ENCODE measurements at regions of chr15 and their contacts with region 1.

Region 1: DNA sequence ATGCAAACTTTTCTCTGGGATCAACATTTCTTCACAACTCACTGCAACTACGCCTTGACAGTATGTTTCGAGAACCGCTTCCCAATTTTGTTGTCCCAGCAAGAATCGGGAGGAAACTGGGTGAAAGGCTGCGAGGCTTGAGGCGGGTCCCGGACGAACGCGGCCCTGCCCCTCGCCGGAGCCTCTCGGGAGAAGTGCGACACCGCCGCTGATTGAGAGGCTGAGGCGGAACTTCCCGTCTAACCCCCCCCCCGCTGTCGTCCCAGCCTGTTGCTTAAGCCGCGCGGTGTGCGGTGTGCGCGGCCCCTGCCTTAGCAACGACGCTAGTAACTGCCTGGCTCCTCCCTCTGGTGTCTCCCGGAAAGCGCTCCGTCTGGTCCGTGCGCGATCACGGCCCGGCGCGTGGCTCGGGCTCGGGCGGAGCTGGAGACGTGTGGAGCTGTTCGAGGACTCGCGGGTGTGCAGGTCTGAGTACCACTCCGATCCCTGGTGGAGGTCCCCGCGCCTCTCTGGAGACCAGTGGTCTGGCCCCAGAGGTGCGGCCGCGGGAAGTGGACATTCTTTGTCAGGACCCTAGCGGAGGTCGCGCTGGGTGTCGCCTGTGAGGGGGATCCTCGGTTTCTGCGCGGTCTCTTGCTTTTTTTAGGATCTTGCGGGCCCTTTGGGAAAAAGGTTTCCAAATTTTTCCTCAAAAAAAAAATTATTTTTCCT is at the starts of genes DTWD1 and FAM227B:
- DNase-seq: peak; percentile 93
- H3K4me3 Mint-ChIP-seq: peak within 1 kb of the TSS; percentile 85
- H3K27ac Mint-ChIP-seq: peak within 1 kb of the TSS; percentile 88
- H3K4me1 Mint-ChIP-seq: peaks cover 40% of the 10 kb centered on the region
- H3K27me3 Mint-ChIP-seq: no peaks in the 10 kb centered on the region
- total RNA-seq, gene DTWD1: 21.1 and 26.5 TPM in 2 replicates
- total RNA-seq, gene FAM227B: 2.3 and 2.9 TPM in 2 replicates

Region 2: DNA sequence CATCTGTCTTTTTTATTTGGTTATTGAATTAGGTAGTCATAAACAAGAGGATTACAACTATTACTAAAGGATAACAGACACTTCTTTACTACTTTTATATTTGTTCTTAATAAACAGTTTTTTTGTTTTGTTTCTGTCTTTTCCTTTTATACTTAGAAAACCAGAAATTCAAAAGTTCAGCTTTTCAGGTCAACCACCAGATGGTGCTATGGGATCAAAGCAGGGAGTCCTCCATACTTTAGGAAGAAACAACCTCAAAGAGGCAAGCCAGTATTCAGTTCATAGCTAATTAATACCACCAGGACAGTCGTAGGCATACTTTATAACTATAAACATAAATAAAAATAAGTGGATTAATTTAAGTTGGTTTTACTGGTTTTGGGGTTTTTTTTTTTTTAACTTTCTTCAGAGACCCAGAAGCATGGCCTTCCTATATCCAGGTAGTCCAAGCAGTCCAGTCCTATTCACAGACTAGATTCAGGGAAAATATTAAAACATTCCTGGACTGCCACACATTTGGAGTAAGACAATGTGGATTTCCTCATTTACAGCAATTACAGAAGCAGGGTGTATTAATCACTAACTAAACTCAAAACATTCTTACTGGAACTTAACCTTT is 758.9 kb before region 1 on chr15:
- intact Hi-C with region 1: loop called (anchors 5 kb)
- DNase-seq: peak; percentile 25
- H3K4me3 Mint-ChIP-seq: no peak overlapping the region
- H3K27ac Mint-ChIP-seq: no peak overlapping the region
- H3K4me1 Mint-ChIP-seq: peaks cover 27% of the 10 kb centered on the region
- H3K27me3 Mint-ChIP-seq: peaks cover 6% of the 10 kb centered on the region

Region 3: GRCh38 chr15:49155110-49155833 is 465.5 kb before region 1 on chr15 and contains the start of gene COPS2:
- intact Hi-C with region 1: loop called (anchors 2 kb)
- DNase-seq: peak; percentile 93
- H3K4me3 Mint-ChIP-seq: peak within 1 kb of the TSS; percentile 99
- H3K27ac Mint-ChIP-seq: peak within 1 kb of the TSS; percentile 99
- H3K4me1 Mint-ChIP-seq: peaks cover 47% of the 10 kb centered on the region
- H3K27me3 Mint-ChIP-seq: peaks cover 3% of the 10 kb centered on the region
- total RNA-seq, gene COPS2: 99.7 and 105 TPM in 2 replicates

Region 4: GRCh38 chr15:49471733-49472132 is 149.1 kb before region 1 on chr15:
- intact Hi-C with region 1: loop called (anchors 2 kb)
- DNase-seq: peak; percentile 8
- H3K4me3 Mint-ChIP-seq: no peak overlapping the region
- H3K27ac Mint-ChIP-seq: no peak overlapping the region
- H3K4me1 Mint-ChIP-seq: peaks cover 20% of the 10 kb centered on the region
- H3K27me3 Mint-ChIP-seq: peaks cover 4% of the 10 kb centered on the region

Region 5: GRCh38 chr15:49637857-49638256 is 17.0 kb after region 1 on chr15:
- intact Hi-C with region 1: no loop called
- DNase-seq: no peak
- H3K4me3 Mint-ChIP-seq: no peak overlapping the region
- H3K27ac Mint-ChIP-seq: no peak overlapping the region
- H3K4me1 Mint-ChIP-seq: no peaks in the 10 kb centered on the region
- H3K27me3 Mint-ChIP-seq: no peaks in the 10 kb centered on the region

Region 6: DNA sequence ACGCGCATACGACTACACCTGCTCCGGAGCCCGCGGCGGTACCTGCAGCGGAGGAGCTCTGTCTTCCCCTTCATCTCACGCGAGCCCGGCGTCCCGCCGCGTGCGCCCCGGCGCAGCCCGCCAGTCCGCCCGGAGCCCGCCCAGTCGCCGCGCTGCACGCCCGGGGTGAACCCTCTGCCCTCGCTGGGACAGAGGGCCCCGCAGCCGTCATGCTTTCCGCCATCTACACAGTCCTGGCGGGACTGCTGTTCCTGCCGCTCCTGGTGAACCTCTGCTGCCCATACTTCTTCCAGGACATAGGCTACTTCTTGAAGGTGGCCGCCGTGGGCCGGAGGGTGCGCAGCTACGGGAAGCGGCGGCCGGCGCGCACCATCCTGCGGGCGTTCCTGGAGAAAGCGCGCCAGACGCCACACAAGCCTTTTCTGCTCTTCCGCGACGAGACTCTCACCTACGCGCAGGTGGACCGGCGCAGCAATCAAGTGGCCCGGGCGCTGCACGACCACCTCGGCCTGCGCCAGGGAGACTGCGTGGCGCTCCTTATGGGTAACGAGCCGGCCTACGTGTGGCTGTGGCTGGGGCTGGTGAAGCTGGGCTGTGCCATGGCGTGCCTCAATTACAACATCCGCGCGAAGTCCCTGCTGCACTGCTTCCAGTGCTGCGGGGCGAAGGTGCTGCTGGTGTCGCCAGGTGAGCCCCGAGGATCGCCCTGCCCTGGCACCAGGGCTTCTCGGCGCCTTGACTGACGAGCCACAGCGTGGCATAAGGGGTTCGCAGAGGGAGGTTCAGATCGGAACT is 561.6 kb after region 1 on chr15:
- intact Hi-C with region 1: loop called (anchors 10 kb)
- DNase-seq: peak; percentile 53
- H3K4me3 Mint-ChIP-seq: peak overlapping the region; percentile 96
- H3K27ac Mint-ChIP-seq: peak overlapping the region; percentile 88
- H3K4me1 Mint-ChIP-seq: peaks cover 60% of the 10 kb centered on the region
- H3K27me3 Mint-ChIP-seq: no peaks in the 10 kb centered on the region

Region 7: DNA sequence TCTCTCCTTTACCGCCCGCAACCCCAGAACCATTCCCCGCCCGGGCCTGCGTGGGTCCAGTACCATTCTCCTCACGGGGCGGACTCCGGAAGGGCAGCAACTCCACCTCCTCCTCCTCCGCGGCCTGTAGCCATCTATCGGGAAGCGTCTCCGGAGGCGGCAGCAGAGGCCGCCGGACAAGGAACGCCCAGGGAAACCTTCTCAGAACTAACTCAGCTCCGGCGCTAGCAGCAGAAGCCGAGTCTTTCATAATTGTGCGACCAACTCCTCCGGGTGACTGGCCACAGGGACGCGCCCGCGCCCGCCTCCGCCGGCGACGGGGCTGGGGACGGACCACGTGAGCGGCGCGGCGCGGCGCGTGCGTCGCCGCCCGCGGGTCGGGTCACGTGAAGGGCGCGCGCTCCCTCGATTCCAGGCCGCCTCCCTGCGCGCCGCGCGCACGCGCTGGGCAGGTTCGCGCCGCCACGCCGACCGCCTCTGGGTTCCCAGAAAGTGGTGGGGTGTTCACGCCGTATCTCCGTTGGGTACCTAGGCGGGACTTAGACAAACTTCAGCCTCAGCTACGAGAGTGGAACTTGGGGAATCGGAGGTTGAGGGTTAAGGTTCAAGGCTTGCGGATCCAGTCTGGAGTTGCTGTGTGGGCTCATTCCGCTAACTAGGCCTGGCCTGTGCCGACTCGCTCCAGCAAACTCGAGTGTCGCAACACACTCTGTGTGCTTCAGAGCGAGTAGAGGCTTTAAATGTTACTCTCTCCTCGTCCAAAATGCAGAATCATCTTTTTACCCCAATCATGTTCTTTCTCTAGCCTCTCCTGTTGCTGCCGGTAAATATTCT is 1065.9 kb after region 1 on chr15 and contains the start of gene TRPM7:
- intact Hi-C with region 1: loop called (anchors 5 kb)
- DNase-seq: peak; percentile 86
- H3K4me3 Mint-ChIP-seq: peak within 1 kb of the TSS; percentile 97
- H3K27ac Mint-ChIP-seq: peak within 1 kb of the TSS; percentile 98
- H3K4me1 Mint-ChIP-seq: peaks cover 47% of the 10 kb centered on the region
- H3K27me3 Mint-ChIP-seq: no peaks in the 10 kb centered on the region
- total RNA-seq, gene TRPM7: 42.4 and 43.6 TPM in 2 replicates

Measured in activated T-helper 1 cell treated with anti-CD3 and anti-CD28 coated beads, Interleukin-12 subunit alpha, Interleukin-12 subunit beta, Interleukin-2, Interleukin-4 antibody, amounts not matched to agents 30 ng/mL and 10 ng/mL and 1 ng/mL, durations not matched to agents 14 hours and 24 hours and 36 hours (primary cell).